ENCODE measurements at regions of chr14 and their contacts with region 1.

Region 1: GRCh38 chr14:102917469-102918211 is 4.8 kb upstream of the AMN start:
- DNase-seq: peak; percentile 64
- ATAC-seq: peak; percentile 23
- H3K4me3 Mint-ChIP-seq: no peak overlapping the region
- H3K27ac Mint-ChIP-seq: peak overlapping the region; percentile 42
- H3K4me1 Mint-ChIP-seq: peaks cover 18% of the 10 kb centered on the region
- H3K27me3 Mint-ChIP-seq: no peaks in the 10 kb centered on the region
- CTCF ChIP-seq: no peak

Region 2: DNA sequence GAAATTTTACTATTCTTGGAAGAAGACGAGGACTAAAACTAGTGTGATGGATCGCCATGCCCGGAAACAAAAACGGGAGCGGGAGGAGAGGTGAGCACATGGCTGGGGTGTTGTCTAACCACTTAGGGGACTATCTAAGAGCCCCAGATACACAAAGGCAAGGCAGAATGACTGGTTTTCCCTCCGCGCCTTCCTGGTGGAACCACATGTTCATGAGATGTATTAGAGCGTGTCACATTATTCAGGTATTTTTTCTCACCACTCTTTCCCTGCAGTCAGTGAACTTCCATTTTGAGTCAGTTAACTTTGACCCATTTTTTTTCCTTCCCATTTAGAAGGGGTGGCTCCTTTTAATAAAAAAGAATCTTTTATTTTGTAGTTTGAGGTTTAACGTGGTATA is 209.1 kb before region 1 on chr14:
- CTCF ChIA-PET with region 1: no interaction called
- POLR2A ChIA-PET with region 1: interaction called, 5 read pairs
- intact Hi-C with region 1: loop called (anchors 5 kb)
- DNase-seq: no peak
- ATAC-seq: no peak
- H3K4me3 Mint-ChIP-seq: no peak overlapping the region
- H3K27ac Mint-ChIP-seq: peak overlapping the region; percentile 30
- H3K4me1 Mint-ChIP-seq: peaks cover 6% of the 10 kb centered on the region
- H3K27me3 Mint-ChIP-seq: no peaks in the 10 kb centered on the region
- CTCF ChIP-seq: no peak

Region 3: DNA sequence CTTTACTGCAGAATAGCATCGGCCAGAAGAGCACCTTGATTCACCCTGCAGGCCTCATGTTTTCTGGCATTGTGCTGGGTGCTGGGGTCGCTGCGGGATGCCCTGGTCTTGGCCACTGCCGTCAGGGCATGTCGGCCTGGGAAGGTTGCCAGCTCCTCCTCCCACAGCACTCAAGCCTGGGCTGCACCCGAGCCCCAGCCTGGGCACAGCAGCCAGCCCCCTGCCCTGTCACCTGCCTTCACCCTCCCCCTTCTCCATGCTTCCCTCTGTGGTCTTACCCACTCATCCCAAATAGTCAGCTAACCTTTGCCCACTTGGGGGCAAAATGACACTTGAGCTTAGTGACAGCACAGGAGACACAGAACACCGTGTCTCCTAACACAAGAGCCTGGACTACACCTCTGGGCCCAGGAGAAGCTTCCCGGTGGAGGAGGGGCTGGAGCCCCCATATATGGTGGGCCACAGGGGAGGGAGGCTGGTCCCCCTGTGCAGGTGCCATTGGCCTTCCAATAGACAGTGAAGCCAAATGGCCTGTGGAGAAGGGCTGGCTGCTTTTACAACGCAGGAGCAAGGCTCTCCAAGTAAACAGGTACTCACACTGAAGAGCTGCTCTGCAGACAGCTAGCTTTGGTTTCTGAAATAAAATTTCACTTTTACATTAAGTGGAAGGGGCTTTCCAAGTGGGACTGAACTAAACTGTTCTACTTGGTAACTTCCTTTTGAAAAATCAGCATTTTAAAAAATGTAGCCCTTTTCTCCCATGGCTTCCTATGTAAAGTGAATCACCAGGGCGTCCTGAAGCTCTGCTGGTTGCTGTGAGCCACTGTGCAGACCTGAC is 46.4 kb before region 1 on chr14:
- CTCF ChIA-PET with region 1: no interaction called
- POLR2A ChIA-PET with region 1: interaction called, 4 read pairs
- intact Hi-C with region 1: loop called (anchors 5 kb)
- DNase-seq: no peak
- ATAC-seq: no peak
- H3K4me3 Mint-ChIP-seq: no peak overlapping the region
- H3K27ac Mint-ChIP-seq: no peak overlapping the region
- H3K4me1 Mint-ChIP-seq: peaks cover 30% of the 10 kb centered on the region
- H3K27me3 Mint-ChIP-seq: no peaks in the 10 kb centered on the region
- CTCF ChIP-seq: no peak

Measured in activated B cell treated with CpG ODN at 0.5 μM for 24 hours (primary cell).